Endothelial cell of umbilical vein (primary cell): ENCODE measurements at regions of chr5 and their contacts with region 1.

Region 1: DNA sequence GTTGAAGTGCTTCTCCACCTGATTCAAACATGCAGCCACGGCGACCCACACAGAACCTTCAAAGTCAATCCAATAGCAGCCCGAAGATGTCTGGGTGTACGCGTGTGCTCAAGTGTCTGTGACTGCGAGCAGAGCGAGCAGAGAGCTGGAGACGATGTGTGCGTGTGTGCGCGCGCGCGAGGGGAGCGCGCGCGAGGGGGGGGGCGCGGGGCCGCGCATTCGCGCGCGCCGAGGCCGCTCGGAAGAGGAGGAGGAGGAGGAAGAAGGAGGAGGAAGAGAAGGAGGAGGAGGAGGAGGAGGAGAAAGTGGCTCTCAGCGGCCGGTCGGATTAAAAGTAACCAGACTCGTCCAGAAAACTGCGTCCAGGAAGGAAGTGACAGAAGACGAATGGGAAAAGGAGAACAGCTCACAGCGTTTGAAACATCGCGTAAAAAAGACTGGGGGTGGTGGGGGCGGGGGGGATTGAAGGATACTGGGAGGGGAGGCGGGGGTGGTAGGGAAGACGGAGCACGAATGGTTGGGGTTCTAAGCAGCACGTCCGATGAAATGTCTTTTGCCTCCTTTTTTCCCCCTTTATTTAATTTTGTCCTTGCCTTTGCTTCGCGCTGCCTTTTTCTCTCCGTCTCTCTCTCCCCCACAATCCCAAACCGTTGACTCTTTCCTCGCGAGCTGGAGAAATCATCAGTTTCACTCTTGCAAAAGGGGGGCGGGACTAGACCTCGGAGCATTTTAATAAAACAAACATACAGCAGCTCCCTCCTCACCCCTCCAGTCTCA is at the start of gene MEF2C:
- DNase-seq: peak; percentile 96
- H3K4me3 ChIP-seq: peak within 1 kb of the TSS; percentile 79 to 100 (median 100)
- H3K27ac ChIP-seq: peak within 1 kb of the TSS; percentile 95
- H3K4me1 ChIP-seq: peaks cover 31% of the 10 kb centered on the region
- H3K27me3 ChIP-seq: no peaks in the 10 kb centered on the region
- CTCF ChIP-seq: no peak
- POLR2A ChIP-seq: peak; percentile 70
- total RNA-seq, gene MEF2C: 58.3 and 67.7 TPM in 2 replicates

Region 2: DNA sequence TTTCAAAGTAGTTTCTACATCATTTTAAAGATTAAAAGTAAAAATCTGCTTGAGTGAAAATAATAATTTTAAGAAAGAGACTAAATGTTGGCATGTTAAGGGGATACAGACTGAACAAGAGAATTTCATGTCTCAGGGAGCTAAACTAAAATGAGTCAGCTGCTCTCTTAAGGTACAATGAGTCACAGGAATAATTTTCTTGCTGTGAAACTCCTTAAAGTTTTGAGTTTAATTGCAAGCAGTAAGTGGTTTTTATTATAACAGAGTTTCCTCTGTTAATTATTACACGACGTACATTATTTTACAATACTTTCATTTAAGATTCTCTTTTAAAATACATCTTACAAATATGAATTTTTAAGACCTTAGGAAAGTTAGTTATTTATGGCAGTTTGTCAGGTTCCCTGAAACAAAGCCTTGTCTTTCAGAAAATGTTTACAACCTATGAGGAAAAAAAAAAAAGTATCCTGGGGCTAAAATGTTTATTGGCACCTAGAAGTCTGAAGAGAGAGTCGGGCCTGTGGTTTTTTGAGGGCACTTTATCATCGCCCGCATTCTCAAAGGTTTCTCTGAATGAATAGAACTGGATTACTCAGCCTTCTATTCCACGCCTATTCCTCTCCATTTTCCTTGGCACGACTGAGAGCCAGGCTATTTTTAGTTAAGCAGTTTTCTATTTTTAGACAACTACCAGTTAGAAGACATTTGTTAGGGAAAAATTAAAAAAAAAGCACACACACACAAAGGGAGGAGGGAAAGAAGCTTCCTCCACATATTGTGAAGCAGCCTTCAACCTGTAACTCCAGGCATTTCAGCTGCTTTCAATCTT is 97.6 kb before region 1 on chr5:
- CTCF ChIA-PET with region 1: interaction called, 6 read pairs
- POLR2A ChIA-PET with region 1: interaction called, 3 read pairs
- dilution Hi-C with region 1: no loop called
- intact Hi-C with region 1: loop called (anchors 1 kb)
- DNase-seq: peak; percentile 96
- H3K4me3 ChIP-seq: peak overlapping the region in 1 of 3 experiments; percentile 46
- H3K27ac ChIP-seq: peak overlapping the region; percentile 97
- H3K4me1 ChIP-seq: peaks cover 33% of the 10 kb centered on the region
- H3K27me3 ChIP-seq: no peaks in the 10 kb centered on the region
- CTCF ChIP-seq: no peak
- POLR2A ChIP-seq: no peak

Region 3: DNA sequence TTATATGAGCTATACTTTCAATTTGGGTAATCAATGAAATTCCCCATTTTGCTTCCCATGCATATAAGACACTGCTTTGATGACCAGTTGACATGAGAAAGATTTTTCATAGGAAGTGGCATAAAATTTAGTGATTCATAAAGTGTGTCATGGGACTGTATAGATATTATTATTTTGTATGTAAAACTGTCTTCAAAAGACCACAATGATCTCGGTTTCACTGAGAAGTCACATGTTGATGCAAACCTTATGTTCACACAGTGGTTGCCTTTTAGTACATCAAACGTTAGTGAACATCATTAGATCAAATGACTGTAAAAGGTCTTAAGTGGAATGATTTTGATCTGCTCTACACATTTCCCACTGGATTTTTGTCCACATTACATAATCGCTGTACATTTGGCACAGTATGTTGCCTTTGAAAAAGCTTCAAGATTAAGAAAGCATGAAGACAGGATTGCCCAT is 348.9 kb after region 1 on chr5:
- CTCF ChIA-PET with region 1: no interaction called
- POLR2A ChIA-PET with region 1: no interaction called
- dilution Hi-C with region 1: no loop called
- intact Hi-C with region 1: loop called (anchors 10 kb)
- DNase-seq: no peak
- H3K4me3 ChIP-seq: no peak overlapping the region
- H3K27ac ChIP-seq: no peak overlapping the region
- H3K4me1 ChIP-seq: no peaks in the 10 kb centered on the region
- H3K27me3 ChIP-seq: no peaks in the 10 kb centered on the region
- CTCF ChIP-seq: no peak
- POLR2A ChIP-seq: no peak

Region 4: DNA sequence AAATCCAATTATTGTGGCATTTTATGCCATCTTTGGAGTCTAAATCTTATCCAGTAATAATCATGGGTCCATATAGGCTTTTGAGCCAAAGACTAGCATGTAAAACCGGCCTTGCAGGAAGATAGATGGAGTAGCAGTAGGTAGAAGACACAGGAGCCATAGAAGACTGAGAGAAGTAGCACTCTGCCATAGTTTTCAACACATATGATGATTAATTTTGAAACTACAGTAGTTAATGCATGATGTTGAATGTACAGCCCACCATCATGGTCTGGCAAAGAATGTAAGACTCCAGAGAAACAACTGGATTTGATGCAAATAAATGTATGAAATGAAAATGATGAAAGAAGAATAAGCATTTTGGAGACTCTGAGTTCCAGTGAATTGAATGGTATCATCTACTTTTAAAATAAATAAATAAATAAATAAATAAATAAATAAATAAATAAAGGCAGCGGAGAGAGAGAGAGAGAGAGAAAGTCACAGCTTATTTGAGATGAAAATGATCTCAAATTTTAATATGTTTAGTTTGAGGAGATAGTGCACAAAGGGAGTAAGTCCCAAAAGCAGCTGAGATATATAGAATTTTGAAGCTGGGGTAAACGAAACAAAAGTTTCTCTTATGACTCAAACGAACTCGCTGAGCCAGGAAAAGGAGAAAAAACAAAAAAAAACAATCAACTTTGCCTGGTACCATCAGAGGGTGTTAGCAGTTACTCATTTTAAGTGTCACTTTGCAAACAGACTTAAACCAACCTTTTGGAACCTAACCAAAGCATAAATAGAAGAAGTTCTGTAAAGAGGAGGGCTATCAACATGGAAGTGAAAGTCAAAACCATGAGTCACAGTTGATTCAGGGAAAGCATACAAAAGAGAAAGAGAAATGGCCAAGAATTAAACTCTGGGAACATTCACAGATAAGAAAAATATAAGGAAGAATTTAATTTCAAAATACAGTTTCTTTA is 1137.6 kb after region 1 on chr5:
- CTCF ChIA-PET with region 1: no interaction called
- POLR2A ChIA-PET with region 1: no interaction called
- dilution Hi-C with region 1: no loop called
- intact Hi-C with region 1: loop called (anchors 1 kb)
- DNase-seq: peak; percentile 88
- H3K4me3 ChIP-seq: peak overlapping the region; percentile 36 to 68 (median 36)
- H3K27ac ChIP-seq: peak overlapping the region; percentile 93
- H3K4me1 ChIP-seq: peaks cover 6% of the 10 kb centered on the region
- H3K27me3 ChIP-seq: no peaks in the 10 kb centered on the region
- CTCF ChIP-seq: no peak
- POLR2A ChIP-seq: no peak

Region 5: DNA sequence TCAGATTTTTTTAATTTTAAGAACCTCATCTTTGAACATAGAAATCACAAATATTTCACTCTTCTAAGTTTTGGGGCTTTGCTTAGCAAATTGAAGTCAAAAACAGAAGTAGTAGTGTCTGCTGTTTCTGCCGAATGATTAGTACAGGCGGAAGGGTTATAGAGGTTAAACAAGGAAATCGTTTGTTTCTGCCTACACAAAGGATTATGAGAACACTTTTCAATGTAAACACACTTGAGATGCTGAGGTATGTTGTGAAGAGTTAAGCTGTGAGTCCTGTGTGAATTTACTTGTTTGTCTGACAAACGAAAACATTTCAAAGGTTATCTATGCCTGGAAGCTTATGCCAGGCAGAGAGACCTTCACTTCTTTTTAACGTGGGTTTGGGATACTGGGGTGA is 1301.5 kb after region 1 on chr5:
- CTCF ChIA-PET with region 1: no interaction called
- POLR2A ChIA-PET with region 1: no interaction called
- dilution Hi-C with region 1: no loop called
- intact Hi-C with region 1: loop called (anchors 1 kb)
- DNase-seq: no peak
- H3K4me3 ChIP-seq: no peak overlapping the region
- H3K27ac ChIP-seq: no peak overlapping the region
- H3K4me1 ChIP-seq: no peaks in the 10 kb centered on the region
- H3K27me3 ChIP-seq: no peaks in the 10 kb centered on the region
- CTCF ChIP-seq: no peak
- POLR2A ChIP-seq: no peak